AG04450 (cell line): ENCODE measurements at regions of chr4 and their contacts with region 1.

Region 1: DNA sequence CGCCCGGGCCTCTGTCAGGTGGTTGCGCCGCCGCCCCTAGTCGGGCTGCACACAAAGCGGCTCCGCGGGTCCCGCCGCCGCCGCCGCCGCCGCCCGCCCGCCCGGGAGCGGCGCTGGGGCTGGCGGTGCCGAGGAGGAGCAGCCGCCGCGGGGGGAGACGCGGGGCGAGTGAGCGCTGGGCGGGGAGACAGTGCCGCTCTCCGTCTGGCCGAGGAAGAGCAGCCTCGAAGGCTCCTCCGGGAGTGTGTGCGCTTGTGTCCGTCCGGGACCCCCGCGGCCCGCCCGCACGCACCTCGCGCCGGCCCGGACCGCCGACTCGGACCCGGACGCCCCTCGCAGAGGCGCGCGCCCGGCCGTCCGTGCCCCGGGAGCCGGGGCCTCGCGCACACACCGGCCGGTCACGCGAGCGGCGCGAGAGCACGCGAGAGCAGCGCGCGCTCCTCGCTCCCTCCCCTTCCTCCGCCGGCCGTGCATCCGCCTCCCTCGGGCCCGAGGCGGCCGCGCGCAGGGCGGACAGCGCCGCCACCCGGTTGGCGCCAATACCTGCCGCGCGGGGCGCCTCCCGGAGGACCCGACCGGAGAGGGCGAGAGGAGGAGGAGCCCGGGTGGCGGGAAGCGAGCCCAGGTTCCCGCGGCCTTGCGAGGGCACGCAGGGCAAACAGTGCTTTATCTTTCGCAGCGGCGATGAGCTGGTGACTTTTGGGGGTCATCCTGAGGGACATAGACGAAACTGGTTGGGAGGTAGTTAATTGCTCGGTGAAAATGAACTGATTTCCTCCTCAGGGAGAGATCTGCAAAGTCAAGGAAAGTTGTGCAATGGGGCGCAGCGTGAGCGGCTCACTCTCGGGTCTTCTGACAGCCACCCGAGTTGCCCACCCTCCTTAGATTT is at the start of gene PDS5A:
- DNase-seq: peak; percentile 54
- H3K4me3 ChIP-seq: peak within 1 kb of the TSS; percentile 78
- H3K27ac ChIP-seq: peak within 1 kb of the TSS; percentile 81
- H3K27me3 ChIP-seq: no peaks in the 10 kb centered on the region
- CTCF ChIP-seq: peak; percentile 71
- polyA plus RNA-seq, gene PDS5A: 38.2 and 49.5 TPM in 2 replicates

Region 2: GRCh38 chr4:39697740-39698423 is 279.9 kb before region 1 on chr4 and contains the start of gene UBE2K:
- CTCF ChIA-PET with region 1: interaction called, 11 read pairs
- POLR2A ChIA-PET with region 1: no interaction called
- DNase-seq: no peak
- H3K4me3 ChIP-seq: peak within 1 kb of the TSS; percentile 96
- H3K27ac ChIP-seq: peak within 1 kb of the TSS; percentile 81
- H3K27me3 ChIP-seq: no peaks in the 10 kb centered on the region
- CTCF ChIP-seq: no peak
- polyA plus RNA-seq, gene UBE2K: 79.3 and 101 TPM in 2 replicates

Region 3: DNA sequence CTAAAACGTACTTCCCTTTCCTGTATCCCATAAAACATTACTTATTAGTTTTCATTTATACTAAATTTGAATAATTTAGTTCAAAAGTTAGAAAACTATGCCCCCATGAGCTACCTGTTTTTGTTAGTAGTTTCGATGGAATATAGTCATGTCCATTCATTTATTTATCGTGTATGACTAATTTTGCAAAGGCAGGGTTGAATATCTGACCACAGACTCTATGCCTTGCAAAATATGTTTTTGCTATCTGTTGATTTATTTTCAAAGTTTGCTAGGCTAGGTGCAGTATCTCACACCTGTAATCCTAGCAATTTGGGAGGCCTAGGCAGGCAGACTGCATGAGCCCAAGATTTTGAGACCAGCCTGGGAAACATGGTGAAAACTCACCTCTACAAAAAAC is 78.4 kb before region 1 on chr4:
- CTCF ChIA-PET with region 1: interaction called, 14 read pairs
- POLR2A ChIA-PET with region 1: no interaction called
- DNase-seq: no peak
- H3K4me3 ChIP-seq: no peak overlapping the region
- H3K27ac ChIP-seq: no peak overlapping the region
- H3K27me3 ChIP-seq: no peaks in the 10 kb centered on the region
- CTCF ChIP-seq: no peak

Region 4: GRCh38 chr4:40114206-40114605 is 136.5 kb after region 1 on chr4:
- CTCF ChIA-PET with region 1: no interaction called
- POLR2A ChIA-PET with region 1: no interaction called
- DNase-seq: no peak
- H3K4me3 ChIP-seq: no peak overlapping the region
- H3K27ac ChIP-seq: no peak overlapping the region
- H3K27me3 ChIP-seq: no peaks in the 10 kb centered on the region
- CTCF ChIP-seq: no peak

Region 5: DNA sequence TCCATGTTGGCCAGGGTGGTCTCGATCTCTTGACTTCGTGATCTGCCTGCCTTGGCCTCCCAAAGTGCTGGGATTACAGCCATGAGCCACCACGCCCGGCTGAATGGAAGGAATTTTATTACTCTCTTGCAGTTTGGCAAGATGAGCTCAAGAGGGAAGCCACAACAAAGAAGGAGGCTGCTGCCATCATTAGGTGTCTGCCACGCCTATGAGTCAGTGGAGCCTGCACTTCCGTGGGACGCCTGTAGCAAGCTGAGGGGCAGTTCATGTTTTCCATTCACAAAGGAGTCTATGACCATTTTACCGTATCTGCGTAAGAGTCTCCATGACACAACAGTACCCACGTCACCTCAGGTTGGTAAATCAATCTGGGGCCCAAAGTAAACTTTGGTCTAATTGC is 306.2 kb after region 1 on chr4:
- CTCF ChIA-PET with region 1: no interaction called
- POLR2A ChIA-PET with region 1: no interaction called
- DNase-seq: no peak
- H3K4me3 ChIP-seq: no peak overlapping the region
- H3K27ac ChIP-seq: no peak overlapping the region
- H3K27me3 ChIP-seq: peaks cover 20% of the 10 kb centered on the region
- CTCF ChIP-seq: no peak